OCI-LY7 (cell line): ENCODE measurements at regions of chr2 and their contacts with region 1.

Region 1: GRCh38 chr2:161308178-161308955 is at the start of gene PSMD14:
- DNase-seq: peak; percentile 95
- H3K4me3 ChIP-seq: peak within 1 kb of the TSS; percentile 87
- H3K27ac ChIP-seq: peak within 1 kb of the TSS; percentile 90
- H3K4me1 ChIP-seq: peaks cover 13% of the 10 kb centered on the region
- CTCF ChIP-seq: no peak
- total RNA-seq, gene PSMD14: 49.2 and 65.6 TPM in 2 replicates

Region 2: GRCh38 chr2:161160226-161161069 is 147.9 kb before region 1 on chr2 and contains the start of gene TANK:
- CTCF ChIA-PET with region 1: no interaction called
- POLR2A ChIA-PET with region 1: interaction called, 3 read pairs
- intact Hi-C with region 1: loop called (anchors 1 kb)
- DNase-seq: peak; percentile 97
- H3K4me3 ChIP-seq: peak within 1 kb of the TSS; percentile 85
- H3K27ac ChIP-seq: peak within 1 kb of the TSS; percentile 91
- H3K4me1 ChIP-seq: peaks cover 29% of the 10 kb centered on the region
- CTCF ChIP-seq: 0 out of 2 replicates have a peak, but pooled peaks have one; percentile 12
- total RNA-seq, gene TANK: 43.4 and 52.6 TPM in 2 replicates

Region 3: DNA sequence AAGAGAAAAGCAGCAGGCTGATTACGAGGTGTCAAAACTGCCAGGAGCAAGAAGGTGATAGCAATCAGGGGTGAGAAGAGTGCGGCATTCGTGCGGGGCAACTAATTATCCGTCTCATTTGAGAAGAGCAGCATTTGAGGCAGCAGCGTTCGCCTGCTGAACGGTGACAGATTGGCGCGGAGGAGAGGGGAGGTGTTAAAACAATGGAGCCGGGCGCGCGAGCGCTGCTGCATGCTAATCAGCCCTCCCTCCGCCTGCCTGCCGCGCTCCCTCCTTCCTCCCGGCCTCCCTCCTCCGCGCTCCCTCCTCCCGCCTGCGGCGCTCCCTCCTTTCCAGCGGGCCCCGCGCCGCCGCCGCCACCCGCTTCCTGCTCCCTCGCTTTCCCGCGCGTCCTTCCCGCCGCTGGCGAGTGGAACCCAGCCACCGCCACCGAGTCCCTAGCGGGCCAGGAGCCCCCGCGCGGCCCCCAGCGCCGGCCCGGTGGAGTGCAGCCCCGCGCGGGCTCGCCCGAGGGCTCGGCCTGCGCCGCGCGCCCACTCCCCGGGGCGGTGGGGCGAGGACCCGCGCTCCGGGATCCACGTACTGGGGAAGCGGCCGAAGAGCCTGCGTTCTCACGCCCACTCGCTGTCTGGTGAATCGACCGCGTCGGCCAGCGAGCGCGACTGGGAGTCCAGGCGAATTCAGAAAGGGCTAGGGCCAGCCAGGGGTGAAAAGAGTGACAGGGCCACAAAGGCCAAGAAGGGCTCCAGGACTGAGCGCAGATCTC is 69.6 kb before region 1 on chr2:
- CTCF ChIA-PET with region 1: no interaction called
- POLR2A ChIA-PET with region 1: interaction called, 17 read pairs
- intact Hi-C with region 1: no loop called
- DNase-seq: peak; percentile 35
- H3K4me3 ChIP-seq: peak overlapping the region; percentile 57
- H3K27ac ChIP-seq: no peak overlapping the region
- H3K4me1 ChIP-seq: peaks cover 56% of the 10 kb centered on the region
- CTCF ChIP-seq: no peak

Region 4: DNA sequence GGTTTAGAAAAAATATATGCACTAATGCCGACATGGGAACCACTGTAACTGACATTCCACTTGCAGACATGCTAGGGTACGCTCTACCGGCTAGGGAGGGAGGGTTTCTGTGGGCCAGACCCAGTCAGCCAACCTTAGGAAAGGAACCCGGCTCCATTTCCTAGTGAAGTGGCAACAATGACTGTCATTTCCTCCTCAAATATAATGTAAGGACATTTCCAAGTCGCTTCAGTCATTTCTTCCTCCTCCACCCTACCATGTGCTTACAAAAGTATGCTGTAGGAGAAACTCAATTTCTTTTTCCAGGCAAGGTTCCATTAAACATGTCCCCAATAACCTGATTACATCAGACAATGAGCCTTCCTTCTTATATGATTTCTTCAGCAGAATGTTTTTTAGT is 64.5 kb before region 1 on chr2:
- CTCF ChIA-PET with region 1: no interaction called
- POLR2A ChIA-PET with region 1: interaction called, 17 read pairs
- intact Hi-C with region 1: loop called (anchors 2 kb)
- DNase-seq: peak; percentile 40
- H3K4me3 ChIP-seq: peak overlapping the region; percentile 73
- H3K27ac ChIP-seq: peak overlapping the region; percentile 65
- H3K4me1 ChIP-seq: peaks cover 47% of the 10 kb centered on the region
- CTCF ChIP-seq: no peak

Region 5: DNA sequence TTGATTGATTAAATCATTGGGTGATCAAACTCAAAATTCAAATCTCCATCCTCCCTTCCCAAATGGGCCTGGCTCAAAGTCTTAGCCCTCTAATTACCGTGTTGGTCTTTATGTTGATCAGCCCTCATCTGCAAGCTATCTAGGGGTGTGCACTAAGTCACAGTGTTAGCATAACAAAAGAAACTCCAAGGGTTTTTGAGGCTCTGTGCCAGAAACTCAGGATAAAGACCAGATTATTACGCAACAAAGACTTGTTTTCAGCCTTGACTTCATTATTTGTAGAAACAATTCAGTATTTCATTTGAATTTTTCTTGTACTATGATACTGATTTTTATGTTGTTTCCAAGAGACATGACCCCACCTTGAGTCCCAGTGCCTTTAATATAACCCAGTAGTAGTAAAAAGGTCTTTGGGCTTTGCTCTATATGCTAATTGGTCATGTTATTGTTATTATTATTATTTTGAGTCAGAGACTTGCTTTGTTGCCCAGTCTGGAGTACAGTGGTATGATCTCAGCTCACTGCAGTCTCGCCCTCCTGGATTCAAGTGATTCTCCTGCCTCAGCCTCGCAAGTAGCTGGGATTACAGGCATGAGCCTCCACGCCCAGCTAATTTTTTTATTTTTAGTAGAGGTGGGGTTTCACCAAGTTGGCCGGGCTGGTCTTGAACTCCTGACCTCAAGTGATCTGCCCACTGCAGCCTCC is 13.7 kb after region 1 on chr2:
- CTCF ChIA-PET with region 1: interaction called, 3 read pairs
- POLR2A ChIA-PET with region 1: interaction called, 13 read pairs
- intact Hi-C with region 1: no loop called
- DNase-seq: no peak
- H3K4me3 ChIP-seq: no peak overlapping the region
- H3K27ac ChIP-seq: no peak overlapping the region
- H3K4me1 ChIP-seq: no peaks in the 10 kb centered on the region
- CTCF ChIP-seq: no peak